Right lobe of liver (tissue), 6 donors: ENCODE measurements at regions of chr16 and their contacts with region 1.

Region 1: GRCh38 chr16:22898874-22899348 is 84.9 kb downstream of the HS3ST2 start:
- DNase-seq: peak in 2 of 3 donors; percentile 70 to 78
- ATAC-seq: peak; percentile 74 to 89 (median 81)
- H3K4me3 ChIP-seq: no peak overlapping the region
- H3K27ac ChIP-seq: no peak overlapping the region
- H3K4me1 ChIP-seq: no peaks in the 10 kb centered on the region
- H3K27me3 ChIP-seq: no peaks in the 10 kb centered on the region
- CTCF ChIP-seq: peak; percentile 73 to 92 (median 79)
- POLR2A ChIP-seq: no peak

Region 2: GRCh38 chr16:22694887-22695382 is 204.0 kb before region 1 on chr16:
- intact Hi-C with region 1: no loop called
- DNase-seq: no peak
- ATAC-seq: peak in 2 of 4 donors; percentile 11 to 42
- H3K4me3 ChIP-seq: no peak overlapping the region
- H3K27ac ChIP-seq: no peak overlapping the region
- H3K4me1 ChIP-seq: no peaks in the 10 kb centered on the region
- H3K27me3 ChIP-seq: no peaks in the 10 kb centered on the region
- CTCF ChIP-seq: no peak
- POLR2A ChIP-seq: no peak

Region 3: GRCh38 chr16:23195366-23195978 is 296.6 kb after region 1 on chr16:
- intact Hi-C with region 1: loop called in 1 of 2 experiments (anchors 10 kb)
- DNase-seq: no peak
- ATAC-seq: peak in 3 of 4 donors; percentile 34 to 56 (median 50)
- H3K4me3 ChIP-seq: no peak overlapping the region
- H3K27ac ChIP-seq: no peak overlapping the region
- H3K4me1 ChIP-seq: no peaks in the 10 kb centered on the region
- H3K27me3 ChIP-seq: no peaks in the 10 kb centered on the region
- CTCF ChIP-seq: no peak
- POLR2A ChIP-seq: no peak